Activated naive CD4-positive, alpha-beta T cell treated with anti-CD3 and anti-CD28 coated beads for 36 hours (primary cell): ENCODE measurements at regions of chr2 and their contacts with region 1.

Region 1: GRCh38 chr2:174771631-174772471 is 7.6 kb upstream of the CHRNA1 start:
- DNase-seq: peak; percentile 74
- H3K4me3 Mint-ChIP-seq: no peak overlapping the region
- H3K27ac Mint-ChIP-seq: no peak overlapping the region
- H3K4me1 Mint-ChIP-seq: peaks cover 13% of the 10 kb centered on the region
- H3K27me3 Mint-ChIP-seq: no peaks in the 10 kb centered on the region

Region 2: DNA sequence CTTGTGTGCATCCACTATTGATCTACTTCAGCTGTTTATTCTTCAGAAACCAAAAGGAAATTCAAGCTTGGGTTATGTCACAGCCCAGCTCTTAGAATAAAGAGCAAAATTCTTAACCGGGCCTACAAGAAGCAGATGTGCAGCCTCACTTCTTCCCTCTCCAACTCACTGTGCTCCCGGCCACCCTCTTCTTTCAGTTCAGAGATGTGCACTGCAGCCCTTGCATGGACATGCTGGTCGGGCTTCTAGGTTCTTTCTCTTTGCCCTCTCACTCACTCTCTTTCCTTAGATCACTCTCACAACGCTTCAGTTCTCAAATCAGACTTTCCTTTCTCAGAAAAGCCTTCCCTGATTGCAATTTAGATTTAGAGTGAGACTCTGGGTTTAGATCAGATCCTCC is 129.2 kb after region 1 on chr2:
- CTCF ChIA-PET with region 1: interaction called, 4 read pairs
- intact Hi-C with region 1: loop called (anchors 10 kb)
- DNase-seq: peak; percentile 48
- H3K4me3 Mint-ChIP-seq: peak overlapping the region; percentile 62
- H3K27ac Mint-ChIP-seq: peak overlapping the region; percentile 68
- H3K4me1 Mint-ChIP-seq: peaks cover 26% of the 10 kb centered on the region
- H3K27me3 Mint-ChIP-seq: no peaks in the 10 kb centered on the region

Region 3: GRCh38 chr2:174925046-174925784 is 153.4 kb after region 1 on chr2:
- CTCF ChIA-PET with region 1: no interaction called
- intact Hi-C with region 1: loop called (anchors 5 kb)
- DNase-seq: no peak
- H3K4me3 Mint-ChIP-seq: no peak overlapping the region
- H3K27ac Mint-ChIP-seq: no peak overlapping the region
- H3K4me1 Mint-ChIP-seq: no peaks in the 10 kb centered on the region
- H3K27me3 Mint-ChIP-seq: no peaks in the 10 kb centered on the region

Region 4: GRCh38 chr2:174985630-174986029 is 213.8 kb after region 1 on chr2:
- CTCF ChIA-PET with region 1: interaction called, 42 read pairs
- intact Hi-C with region 1: loop called (anchors 1 kb)
- DNase-seq: no peak
- H3K4me3 Mint-ChIP-seq: no peak overlapping the region
- H3K27ac Mint-ChIP-seq: no peak overlapping the region
- H3K4me1 Mint-ChIP-seq: peaks cover 2% of the 10 kb centered on the region
- H3K27me3 Mint-ChIP-seq: no peaks in the 10 kb centered on the region